ENCODE measurements at regions of chr1 and their contacts with region 1.

Region 1: DNA sequence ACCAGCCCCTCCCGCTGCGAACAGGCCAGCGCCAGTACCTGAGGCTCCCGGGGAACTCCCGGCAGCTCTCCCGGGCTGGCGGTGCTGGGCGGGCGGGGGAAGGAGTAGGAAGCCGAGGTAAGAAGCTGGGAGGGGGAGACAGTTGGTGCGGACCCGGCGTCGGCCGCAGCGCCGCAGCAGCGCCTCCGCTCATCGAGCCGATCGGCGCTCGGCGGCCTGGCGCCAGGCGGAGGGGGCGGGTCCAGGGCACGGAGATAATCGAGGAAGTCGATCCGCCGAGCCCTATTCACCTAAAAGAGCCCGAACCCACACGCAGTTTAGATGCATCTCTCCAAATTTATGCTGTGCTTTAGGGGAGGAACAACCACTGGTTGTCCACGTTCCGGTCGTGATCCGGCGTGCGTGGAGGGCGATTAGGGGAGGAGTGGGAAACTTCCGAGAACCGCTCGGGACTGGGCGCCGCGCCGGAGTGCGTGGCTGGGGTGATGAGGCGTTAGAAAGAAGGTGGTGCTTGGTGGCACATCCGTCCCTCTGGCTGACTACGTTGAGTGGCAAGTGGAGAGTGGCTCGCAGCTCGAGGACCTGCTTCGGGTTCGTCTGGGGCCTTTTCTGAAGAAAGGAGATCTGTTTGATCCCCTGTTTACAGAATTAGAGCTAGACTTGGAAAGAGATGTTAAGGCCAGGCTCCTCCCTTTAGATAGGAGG is at the start of gene VAMP4:
- DNase-seq: peak; percentile 92
- H3K4me3 Mint-ChIP-seq: peak within 1 kb of the TSS; percentile 99
- H3K27ac Mint-ChIP-seq: peak within 1 kb of the TSS; percentile 100
- H3K4me1 Mint-ChIP-seq: peaks cover 47% of the 10 kb centered on the region
- H3K27me3 Mint-ChIP-seq: no peaks in the 10 kb centered on the region
- total RNA-seq, gene VAMP4: 13.2 to 14.2 TPM

Region 2: GRCh38 chr1:169794530-169795416 is 1947.3 kb before region 1 on chr1 and contains the start of gene METTL18:
- CTCF ChIA-PET with region 1: no interaction called
- POLR2A ChIA-PET with region 1: no interaction called
- intact Hi-C with region 1: loop called (anchors 10 kb)
- DNase-seq: peak; percentile 96
- H3K4me3 Mint-ChIP-seq: peak within 1 kb of the TSS; percentile 100
- H3K27ac Mint-ChIP-seq: peak within 1 kb of the TSS; percentile 99
- H3K4me1 Mint-ChIP-seq: peaks cover 44% of the 10 kb centered on the region
- H3K27me3 Mint-ChIP-seq: no peaks in the 10 kb centered on the region
- total RNA-seq, gene METTL18: 10.8 to 10.9 TPM

Region 3: GRCh38 chr1:171501305-171502024 is 240.6 kb before region 1 on chr1:
- CTCF ChIA-PET with region 1: no interaction called
- POLR2A ChIA-PET with region 1: no interaction called
- intact Hi-C with region 1: loop called (anchors 5 kb)
- DNase-seq: peak; percentile 25
- H3K4me3 Mint-ChIP-seq: no peak overlapping the region
- H3K27ac Mint-ChIP-seq: peak overlapping the region; percentile 85
- H3K4me1 Mint-ChIP-seq: peaks cover 89% of the 10 kb centered on the region
- H3K27me3 Mint-ChIP-seq: no peaks in the 10 kb centered on the region

Region 4: GRCh38 chr1:171654942-171655745 is 86.9 kb before region 1 on chr1:
- CTCF ChIA-PET with region 1: interaction called, 8 read pairs
- POLR2A ChIA-PET with region 1: no interaction called
- intact Hi-C with region 1: loop called (anchors 1 kb)
- DNase-seq: peak; percentile 90
- H3K4me3 Mint-ChIP-seq: peak overlapping the region; percentile 43
- H3K27ac Mint-ChIP-seq: no peak overlapping the region
- H3K4me1 Mint-ChIP-seq: peaks cover 11% of the 10 kb centered on the region
- H3K27me3 Mint-ChIP-seq: peaks cover 5% of the 10 kb centered on the region

Region 5: GRCh38 chr1:171841050-171841940 is 99.3 kb after region 1 on chr1 and contains the start of gene DNM3:
- CTCF ChIA-PET with region 1: interaction called, 3 read pairs
- POLR2A ChIA-PET with region 1: interaction called, 3 read pairs
- intact Hi-C with region 1: loop called (anchors 5 kb)
- DNase-seq: peak; percentile 81
- H3K4me3 Mint-ChIP-seq: peak within 1 kb of the TSS; percentile 77
- H3K27ac Mint-ChIP-seq: no peak within 1 kb of the TSS
- H3K4me1 Mint-ChIP-seq: peaks cover 12% of the 10 kb centered on the region
- H3K27me3 Mint-ChIP-seq: peaks cover 14% of the 10 kb centered on the region
- total RNA-seq, gene DNM3: 0.93 to 1.2 TPM